HepG2 (cell line): ENCODE measurements at regions of chr17 and their contacts with region 1.

Region 1: DNA sequence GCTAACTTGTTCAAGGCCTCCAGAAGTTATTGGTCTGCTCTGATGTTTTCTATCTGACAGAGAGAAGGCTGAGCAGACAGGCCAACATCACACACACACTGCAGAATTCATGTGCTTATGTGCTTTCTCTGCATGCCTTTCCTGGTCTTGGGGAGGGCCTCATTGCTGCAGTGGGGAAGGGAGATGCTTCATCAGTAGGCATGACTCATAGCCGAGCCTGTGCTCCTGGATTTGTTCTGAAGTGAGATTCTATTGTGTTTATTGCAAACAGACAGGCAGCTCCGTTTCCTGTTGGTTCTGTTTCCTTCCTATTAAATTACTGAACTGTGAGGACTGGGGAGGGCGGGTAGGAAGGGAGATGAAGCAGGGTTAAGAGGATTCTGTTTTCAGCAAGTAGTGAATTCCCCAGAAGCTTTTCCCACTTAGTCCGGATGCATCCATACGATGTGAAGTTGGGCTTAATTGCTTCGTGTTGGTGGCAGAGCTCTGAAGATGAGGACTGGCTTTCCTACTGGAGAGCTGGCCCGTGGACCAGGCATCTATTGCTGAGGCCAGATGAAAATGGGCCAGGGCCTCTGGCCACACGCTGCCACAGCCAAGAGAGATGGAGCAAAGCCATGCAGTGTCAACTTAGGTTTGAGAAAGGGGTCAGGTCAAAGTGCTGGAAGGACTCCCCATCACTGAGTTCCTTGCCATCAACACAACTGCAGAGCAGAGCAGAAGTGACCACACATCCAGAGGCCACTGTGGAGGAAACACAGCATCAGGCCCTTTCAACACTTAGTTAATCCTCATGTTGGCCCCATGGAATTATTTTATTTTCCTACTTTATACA is 179.3 kb downstream of the UTP18 start:
- DNase-seq: no peak
- ATAC-seq: no peak
- H3K4me3 ChIP-seq: no peak overlapping the region
- H3K27ac ChIP-seq: no peak overlapping the region
- H3K4me1 ChIP-seq: 0 out of 2 replicates have a peak, but pooled peaks cover 4% of the 10 kb centered on the region
- H3K27me3 ChIP-seq: no peaks in the 10 kb centered on the region
- CTCF ChIP-seq: no peak
- EP300 ChIP-seq: no peak
- POLR2A ChIP-seq: no peak
- RAD21 ChIP-seq: no peak

Region 2: DNA sequence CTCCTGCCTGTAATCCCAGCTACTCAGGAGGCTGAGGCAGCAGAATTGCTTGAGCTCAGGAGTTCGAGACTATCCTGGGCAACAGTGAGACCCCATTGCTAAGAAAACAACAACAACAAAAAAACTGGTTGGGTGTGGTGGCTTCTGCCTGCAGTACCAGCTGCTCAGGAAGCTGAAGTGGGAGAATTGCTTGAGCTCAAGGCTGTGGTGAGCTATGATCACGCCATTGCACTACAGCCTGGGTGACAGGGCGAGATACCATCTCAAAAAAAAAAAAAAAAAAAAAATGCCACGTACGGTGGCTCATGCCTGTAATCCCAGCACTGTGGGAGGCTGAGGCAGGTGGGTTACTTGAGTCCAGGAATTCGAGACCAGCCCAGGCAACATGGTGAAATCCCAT is 239.3 kb before region 1 on chr17:
- CTCF ChIA-PET with region 1: no interaction called
- POLR2A ChIA-PET with region 1: no interaction called
- in situ Hi-C with region 1: no loop called
- intact Hi-C with region 1: no loop called
- DNase-seq: no peak
- ATAC-seq: no peak
- H3K4me3 ChIP-seq: no peak overlapping the region
- H3K27ac ChIP-seq: no peak overlapping the region
- H3K4me1 ChIP-seq: no peaks in the 10 kb centered on the region
- H3K27me3 ChIP-seq: no peaks in the 10 kb centered on the region
- CTCF ChIP-seq: no peak
- EP300 ChIP-seq: no peak
- POLR2A ChIP-seq: no peak
- RAD21 ChIP-seq: no peak

Region 3: DNA sequence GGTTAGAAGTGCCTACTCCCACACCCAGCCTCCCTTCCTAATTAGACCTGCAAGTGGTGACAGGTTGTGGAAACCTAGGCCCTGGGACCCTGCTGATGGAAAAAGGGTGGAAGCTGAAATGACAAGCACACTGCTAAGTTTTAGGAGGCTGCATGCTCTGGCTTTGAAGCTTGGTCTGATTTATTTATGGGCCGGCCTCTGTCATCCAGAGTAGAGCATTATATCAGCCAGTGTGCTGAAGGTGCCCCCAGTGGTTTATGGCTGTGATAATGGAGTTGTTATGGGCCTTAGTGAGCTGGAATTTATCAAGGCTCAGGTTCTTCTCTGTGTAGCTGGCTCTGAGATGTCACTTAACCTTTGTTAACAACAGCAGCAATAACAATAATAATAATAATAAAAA is 36.7 kb before region 1 on chr17:
- CTCF ChIA-PET with region 1: no interaction called
- POLR2A ChIA-PET with region 1: no interaction called
- in situ Hi-C with region 1: no loop called
- intact Hi-C with region 1: no loop called
- DNase-seq: no peak
- ATAC-seq: no peak
- H3K4me3 ChIP-seq: no peak overlapping the region
- H3K27ac ChIP-seq: no peak overlapping the region
- H3K4me1 ChIP-seq: no peaks in the 10 kb centered on the region
- H3K27me3 ChIP-seq: peaks cover 0 to 9% of the 10 kb centered on the region in 2 experiments; a peak in 3 of 5 replicates
- CTCF ChIP-seq: no peak
- EP300 ChIP-seq: no peak
- POLR2A ChIP-seq: no peak
- RAD21 ChIP-seq: no peak

Region 4: GRCh38 chr17:51487947-51488346 is 48.3 kb after region 1 on chr17:
- CTCF ChIA-PET with region 1: no interaction called
- POLR2A ChIA-PET with region 1: no interaction called
- in situ Hi-C with region 1: no loop called
- intact Hi-C with region 1: loop called (anchors 2 kb)
- DNase-seq: peak; percentile 33
- ATAC-seq: peak; percentile 73
- H3K4me3 ChIP-seq: no peak overlapping the region
- H3K27ac ChIP-seq: no peak overlapping the region
- H3K4me1 ChIP-seq: no peaks in the 10 kb centered on the region
- H3K27me3 ChIP-seq: no peaks in the 10 kb centered on the region
- CTCF ChIP-seq: peak; percentile 58
- EP300 ChIP-seq: no peak
- POLR2A ChIP-seq: no peak
- RAD21 ChIP-seq: no peak